ENCODE measurements at regions of chrX and their contacts with region 1.

Region 1: GRCh38 chrX:123833387-123833786 is 26.5 kb upstream of the XIAP start:
- DNase-seq: peak; percentile 70
- ATAC-seq: peak; percentile 86
- H3K4me3 Mint-ChIP-seq: no peak overlapping the region
- H3K27ac Mint-ChIP-seq: no peak overlapping the region
- H3K4me1 Mint-ChIP-seq: no peaks in the 10 kb centered on the region
- H3K27me3 Mint-ChIP-seq: peaks cover 3% of the 10 kb centered on the region

Region 2: DNA sequence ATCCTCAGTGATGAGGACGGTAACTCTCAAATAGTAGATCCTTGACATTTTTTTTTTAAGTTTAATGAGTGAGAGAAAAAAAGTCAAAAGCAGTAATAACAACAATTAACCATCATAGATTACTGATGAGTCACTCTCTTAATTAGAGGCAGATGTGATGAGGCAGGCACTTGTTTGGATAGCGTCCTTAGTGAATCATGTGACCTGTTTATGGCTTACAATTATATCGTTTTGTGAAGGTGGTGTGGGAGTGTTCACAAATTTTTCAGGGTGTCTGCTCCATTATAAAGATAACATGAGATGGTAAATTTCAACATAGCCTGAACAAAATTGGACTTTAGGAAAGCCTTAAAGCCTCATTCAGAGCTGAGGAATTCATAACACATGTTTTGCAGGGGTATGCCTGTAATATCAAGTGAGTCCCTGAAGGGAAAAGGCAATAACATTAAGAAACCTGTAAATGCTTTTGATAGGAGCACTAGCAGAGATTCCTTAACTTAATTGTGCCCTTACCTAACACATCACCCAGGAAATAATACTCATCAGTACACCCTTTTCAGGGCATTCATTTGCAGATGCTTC is 25.5 kb before region 1 on chrX:
- CTCF ChIA-PET with region 1: no interaction called
- POLR2A ChIA-PET with region 1: no interaction called
- DNase-seq: no peak
- ATAC-seq: no peak
- H3K4me3 Mint-ChIP-seq: no peak overlapping the region
- H3K27ac Mint-ChIP-seq: no peak overlapping the region
- H3K4me1 Mint-ChIP-seq: peaks cover 7% of the 10 kb centered on the region
- H3K27me3 Mint-ChIP-seq: no peaks in the 10 kb centered on the region

Region 3: GRCh38 chrX:123884809-123885408 is 51.5 kb after region 1 on chrX:
- CTCF ChIA-PET with region 1: interaction called, 10 read pairs
- POLR2A ChIA-PET with region 1: no interaction called
- DNase-seq: peak; percentile 48
- ATAC-seq: no peak
- H3K4me3 Mint-ChIP-seq: no peak overlapping the region
- H3K27ac Mint-ChIP-seq: no peak overlapping the region
- H3K4me1 Mint-ChIP-seq: peaks cover 7% of the 10 kb centered on the region
- H3K27me3 Mint-ChIP-seq: no peaks in the 10 kb centered on the region

Region 4: DNA sequence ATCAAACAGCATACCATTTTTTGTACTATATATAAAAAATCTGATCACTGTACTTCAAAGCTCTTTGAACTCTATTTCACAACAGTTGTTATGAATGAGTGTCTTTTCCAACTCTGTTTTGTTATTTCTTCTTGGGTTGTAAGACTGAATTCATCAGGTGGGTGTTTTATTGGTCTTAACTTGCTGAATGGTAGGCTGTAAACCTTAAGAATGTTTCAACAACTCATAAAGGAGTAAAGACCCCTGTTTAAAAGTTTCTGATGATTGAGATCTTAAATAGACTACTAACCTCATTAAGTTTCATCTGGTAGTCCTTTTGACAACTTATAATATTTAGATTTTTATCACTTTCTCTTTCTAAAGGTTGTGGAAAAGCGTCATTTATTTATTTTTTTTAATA is 109.7 kb after region 1 on chrX:
- CTCF ChIA-PET with region 1: no interaction called
- POLR2A ChIA-PET with region 1: no interaction called
- DNase-seq: no peak
- ATAC-seq: no peak
- H3K4me3 Mint-ChIP-seq: no peak overlapping the region
- H3K27ac Mint-ChIP-seq: no peak overlapping the region
- H3K4me1 Mint-ChIP-seq: no peaks in the 10 kb centered on the region
- H3K27me3 Mint-ChIP-seq: no peaks in the 10 kb centered on the region

Measured in activated CD8-positive, alpha-beta T cell treated with anti-CD3 and anti-CD28 coated beads, Interleukin-2, amount 10 ng/mL, durations not matched to agents 7 days and 5 days (primary cell).